GM10248 (cell line): ENCODE measurements at regions of chr3 and their contacts with region 1.

Region 1: DNA sequence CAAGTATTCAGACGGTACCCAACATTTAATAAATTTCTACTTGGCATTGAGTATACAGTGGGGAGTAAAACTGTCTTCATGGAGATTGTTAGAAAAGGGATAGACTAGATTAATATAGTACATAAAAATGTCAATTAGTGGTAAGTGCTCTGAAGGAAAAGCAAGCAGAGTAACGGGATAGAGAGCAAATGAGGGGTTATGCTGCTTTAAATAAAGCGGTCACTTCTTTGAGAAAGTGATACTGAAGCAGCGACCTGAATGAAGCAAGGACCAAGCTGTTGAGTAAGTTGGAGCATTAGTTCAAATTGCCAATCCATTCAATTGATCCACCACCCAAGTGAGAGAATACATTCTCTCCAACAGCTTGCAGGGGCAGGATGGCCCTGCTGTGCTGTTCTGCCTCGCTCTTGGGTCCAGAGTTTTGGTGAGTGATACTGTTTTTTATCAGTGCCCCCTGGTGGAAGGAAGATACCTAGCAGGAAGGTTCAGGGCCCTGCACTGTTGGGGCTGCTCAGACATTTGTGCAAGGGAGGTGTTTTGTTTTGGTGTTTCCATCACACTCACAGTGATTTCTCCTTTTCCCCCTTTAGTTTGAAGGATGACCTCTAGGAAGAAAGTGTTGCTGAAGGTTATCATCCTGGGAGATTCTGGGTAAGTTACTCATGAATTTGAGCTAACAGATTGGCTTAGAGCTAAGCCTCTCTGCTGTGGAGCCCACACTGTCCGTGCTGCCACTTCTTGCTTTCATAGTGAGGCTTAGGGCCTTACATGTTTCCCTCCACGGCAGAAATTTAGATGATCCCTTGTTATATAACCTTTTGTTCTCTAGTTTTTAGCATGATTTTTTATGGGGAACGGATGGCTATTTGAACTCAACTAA is 69.0 kb downstream of the RAB7A start:
- DNase-seq: peak; percentile 79
- CTCF ChIP-seq: peak; percentile 74

Region 2: DNA sequence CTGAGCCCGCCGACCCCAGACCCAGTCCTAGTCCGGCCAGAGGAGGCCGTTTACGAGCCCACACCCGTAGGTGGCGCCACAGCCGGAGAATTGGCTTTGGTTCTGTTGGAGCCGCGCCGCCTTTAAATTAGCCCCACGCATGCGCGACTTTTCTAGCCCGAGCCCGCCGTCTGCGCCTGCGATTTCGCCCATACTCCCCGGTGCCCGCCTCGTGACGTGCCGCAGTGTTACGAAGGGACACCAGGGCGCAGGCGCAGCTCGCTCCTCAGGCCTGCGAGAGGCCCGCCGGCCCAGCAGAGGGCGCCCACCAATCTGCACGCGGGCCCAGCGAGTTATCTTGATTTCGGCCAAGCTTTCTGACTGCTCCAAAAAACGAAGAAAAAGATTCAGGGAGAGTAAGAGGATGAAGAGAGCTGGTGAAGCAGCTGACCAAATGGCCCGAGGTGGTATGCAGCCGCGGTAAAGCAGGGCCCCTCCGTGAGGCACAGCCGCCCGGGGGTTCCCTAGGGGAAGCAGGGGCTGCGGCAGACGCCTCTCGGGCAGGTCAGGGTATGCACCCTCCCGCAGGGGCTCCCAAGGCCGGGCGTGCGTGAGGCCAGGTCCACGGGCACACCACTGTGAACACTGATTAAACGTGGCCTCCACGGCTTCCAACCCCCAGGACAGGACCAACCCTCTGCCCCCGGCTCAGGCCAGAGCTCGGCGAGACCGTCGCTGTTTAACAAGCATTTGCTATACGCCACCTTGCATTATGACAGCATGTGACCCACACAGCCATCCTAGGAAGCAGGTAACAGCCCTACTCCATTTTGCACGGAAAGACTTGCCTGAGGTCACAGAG is 177.2 kb before region 1 on chr3:
- CTCF ChIA-PET with region 1: interaction called, 10 read pairs
- POLR2A ChIA-PET with region 1: no interaction called
- DNase-seq: peak; percentile 100
- CTCF ChIP-seq: peak; percentile 94

Region 3: DNA sequence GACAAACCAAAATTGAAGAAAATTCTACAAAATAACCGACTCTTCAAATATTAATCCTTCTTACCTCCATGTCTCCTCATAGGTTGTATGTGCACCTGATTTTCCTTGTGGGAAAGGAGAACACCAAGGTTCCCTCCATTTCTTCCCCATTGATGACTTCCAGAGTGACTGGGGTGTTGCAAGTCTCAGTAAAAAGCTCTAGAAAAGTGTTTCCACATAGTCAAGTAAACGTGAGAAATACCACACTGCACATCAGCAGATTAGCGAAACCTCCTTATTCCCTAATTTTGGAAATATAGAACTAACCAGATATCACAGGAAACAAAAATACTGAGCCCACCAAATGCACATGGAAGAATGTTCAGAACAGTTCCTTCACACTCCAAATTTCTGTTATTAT is 139.5 kb before region 1 on chr3:
- CTCF ChIA-PET with region 1: interaction called, 4 read pairs
- POLR2A ChIA-PET with region 1: interaction called, 10 read pairs
- DNase-seq: no peak
- CTCF ChIP-seq: no peak

Region 4: DNA sequence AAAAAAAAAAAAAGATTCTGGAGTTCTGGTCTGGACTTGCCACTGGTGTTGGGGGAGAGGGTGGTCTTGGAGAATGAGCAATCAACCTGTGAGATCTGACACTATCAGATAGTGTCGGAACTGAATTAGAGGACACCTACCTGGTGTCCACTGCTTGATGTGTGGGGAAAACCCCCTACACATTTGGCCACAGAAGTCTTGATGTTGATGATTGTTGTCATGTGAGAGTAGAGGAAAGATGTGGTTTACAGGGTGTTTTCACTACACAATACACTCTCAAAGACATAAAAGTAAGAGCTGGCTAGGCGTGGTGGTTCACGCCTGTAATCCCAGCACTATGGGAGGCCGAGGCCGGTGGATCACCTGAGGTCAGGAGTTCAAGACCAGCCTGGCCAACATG is 106.0 kb before region 1 on chr3:
- CTCF ChIA-PET with region 1: interaction called, 11 read pairs
- POLR2A ChIA-PET with region 1: no interaction called
- DNase-seq: no peak
- CTCF ChIP-seq: no peak

Region 5: GRCh38 chr3:128736601-128737000 is 58.4 kb before region 1 on chr3:
- CTCF ChIA-PET with region 1: interaction called, 10 read pairs
- POLR2A ChIA-PET with region 1: interaction called, 7 read pairs
- DNase-seq: no peak
- CTCF ChIP-seq: no peak

Region 6: GRCh38 chr3:128780101-128780837 is 14.7 kb before region 1 on chr3:
- CTCF ChIA-PET with region 1: interaction called, 66 read pairs
- POLR2A ChIA-PET with region 1: no interaction called
- DNase-seq: no peak
- CTCF ChIP-seq: no peak